ENCODE measurements at regions of chr7 and their contacts with region 1.

Region 1: DNA sequence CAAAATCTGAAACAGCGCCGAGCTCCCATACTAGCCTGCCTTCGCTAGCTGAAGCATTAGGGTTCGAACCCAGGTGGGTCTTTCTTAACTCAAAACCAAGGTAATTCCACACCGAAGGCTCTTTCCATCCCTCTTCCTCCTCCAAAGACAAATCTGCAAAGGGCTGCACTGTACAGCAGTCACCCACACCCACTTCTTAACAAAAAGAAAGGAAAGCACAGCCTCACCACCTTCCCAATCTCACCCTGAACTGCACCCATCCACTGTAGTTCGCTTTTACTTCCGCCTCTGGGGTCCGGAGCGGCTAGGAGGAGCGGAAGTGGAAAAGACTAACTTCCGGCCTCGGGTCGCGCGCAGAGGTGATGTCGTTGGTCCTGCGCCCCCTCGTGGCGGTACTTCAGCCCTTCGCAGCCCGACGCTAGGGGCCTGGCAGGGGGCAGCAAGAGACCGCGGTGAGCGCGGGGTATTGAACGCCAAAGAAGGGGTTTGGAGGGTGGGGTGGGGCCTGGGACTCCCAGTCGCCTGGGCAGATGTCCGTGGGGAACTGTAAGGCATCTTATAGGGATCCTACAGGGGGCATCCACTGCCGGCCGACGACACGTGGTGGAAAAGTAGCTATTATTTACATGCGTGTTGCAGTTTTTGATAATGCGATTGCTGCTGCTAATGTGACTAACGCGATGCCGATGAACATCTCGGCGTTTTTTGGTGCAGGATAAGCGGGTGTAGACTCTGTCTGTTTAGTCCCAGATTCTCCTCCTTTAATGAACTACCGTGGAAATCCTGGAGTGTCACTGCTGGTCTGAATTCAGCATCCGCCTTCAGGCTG is at the start of gene MTERF1:
- DNase-seq: peak; percentile 90
- H3K4me3 ChIP-seq: peak within 1 kb of the TSS; percentile 61 to 95 (median 81)
- H3K27ac ChIP-seq: peak within 1 kb of the TSS; percentile 36
- H3K4me1 ChIP-seq: peaks cover 11% of the 10 kb centered on the region
- H3K27me3 ChIP-seq: no peaks in the 10 kb centered on the region
- CTCF ChIP-seq: peak; percentile 96 to 98
- POLR2A ChIP-seq: peak; percentile 90
- total RNA-seq, gene MTERF1: 10.2 TPM in 2 replicates

Region 2: GRCh38 chr7:91046322-91047089 is 834.1 kb before region 1 on chr7:
- CTCF ChIA-PET with region 1: interaction called, 4 read pairs
- POLR2A ChIA-PET with region 1: no interaction called
- dilution Hi-C with region 1: no loop called
- intact Hi-C with region 1: loop called (anchors 5 kb)
- DNase-seq: peak; percentile 21
- H3K4me3 ChIP-seq: no peak overlapping the region
- H3K27ac ChIP-seq: no peak overlapping the region
- H3K4me1 ChIP-seq: no peaks in the 10 kb centered on the region
- H3K27me3 ChIP-seq: no peaks in the 10 kb centered on the region
- CTCF ChIP-seq: peak in 1 of 2 donors; percentile 13
- POLR2A ChIP-seq: no peak

Region 3: DNA sequence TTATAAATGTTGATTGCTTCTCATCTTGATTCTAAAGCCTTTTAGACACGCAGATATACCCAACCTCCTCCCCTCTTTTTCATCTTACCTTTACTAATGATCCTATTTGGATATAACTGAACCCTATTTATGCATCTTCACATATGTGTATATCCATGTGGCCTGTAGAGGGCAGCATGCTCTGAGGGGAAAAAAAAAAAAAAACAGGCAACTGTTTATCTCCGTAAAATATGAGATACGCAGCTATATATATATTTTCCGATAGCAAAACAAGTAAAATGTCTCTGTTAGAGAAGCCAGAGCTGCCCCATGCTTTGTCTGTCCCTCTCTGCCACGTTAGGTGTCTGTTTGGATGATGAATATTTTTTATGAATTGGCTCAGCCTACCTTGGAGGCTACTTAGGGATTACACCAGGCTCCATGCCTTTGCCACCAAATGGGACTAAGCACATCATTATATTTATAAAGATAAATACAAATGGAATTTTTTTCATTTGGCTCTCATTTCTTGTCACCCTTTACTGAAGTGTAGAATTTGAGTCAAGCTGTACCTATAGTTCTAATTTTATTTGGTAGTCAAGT is 791.2 kb before region 1 on chr7:
- CTCF ChIA-PET with region 1: interaction called, 12 read pairs
- POLR2A ChIA-PET with region 1: no interaction called
- dilution Hi-C with region 1: no loop called
- intact Hi-C with region 1: loop called (anchors 1 kb)
- DNase-seq: peak; percentile 60
- H3K4me3 ChIP-seq: peak overlapping the region in 1 of 3 experiments; percentile 7
- H3K27ac ChIP-seq: no peak overlapping the region
- H3K4me1 ChIP-seq: peaks cover 2% of the 10 kb centered on the region
- H3K27me3 ChIP-seq: no peaks in the 10 kb centered on the region
- CTCF ChIP-seq: peak; percentile 54 to 57
- POLR2A ChIP-seq: no peak

Region 4: DNA sequence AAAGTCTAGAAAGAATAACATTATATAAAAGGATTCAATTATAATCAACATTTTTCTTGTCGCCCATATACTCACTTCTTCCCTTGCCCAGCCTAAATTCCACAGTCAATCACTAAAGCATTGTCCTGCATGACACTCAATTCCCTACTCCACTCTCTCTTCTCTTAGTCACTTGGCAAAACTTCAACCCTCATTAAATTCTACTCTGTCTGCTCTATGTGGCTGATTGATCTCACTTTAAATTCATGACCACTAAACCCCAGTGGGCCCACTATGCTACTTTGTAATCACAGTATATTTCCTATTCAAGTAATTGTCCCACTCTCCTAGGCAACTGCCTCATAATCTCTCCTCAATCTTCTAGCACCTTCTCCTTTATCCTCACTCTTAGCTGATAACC is 54.2 kb before region 1 on chr7:
- CTCF ChIA-PET with region 1: interaction called, 48 read pairs
- POLR2A ChIA-PET with region 1: no interaction called
- dilution Hi-C with region 1: no loop called
- intact Hi-C with region 1: loop called (anchors 1 kb)
- DNase-seq: no peak
- H3K4me3 ChIP-seq: no peak overlapping the region
- H3K27ac ChIP-seq: no peak overlapping the region
- H3K4me1 ChIP-seq: no peaks in the 10 kb centered on the region
- H3K27me3 ChIP-seq: no peaks in the 10 kb centered on the region
- CTCF ChIP-seq: no peak
- POLR2A ChIP-seq: no peak

Region 5: DNA sequence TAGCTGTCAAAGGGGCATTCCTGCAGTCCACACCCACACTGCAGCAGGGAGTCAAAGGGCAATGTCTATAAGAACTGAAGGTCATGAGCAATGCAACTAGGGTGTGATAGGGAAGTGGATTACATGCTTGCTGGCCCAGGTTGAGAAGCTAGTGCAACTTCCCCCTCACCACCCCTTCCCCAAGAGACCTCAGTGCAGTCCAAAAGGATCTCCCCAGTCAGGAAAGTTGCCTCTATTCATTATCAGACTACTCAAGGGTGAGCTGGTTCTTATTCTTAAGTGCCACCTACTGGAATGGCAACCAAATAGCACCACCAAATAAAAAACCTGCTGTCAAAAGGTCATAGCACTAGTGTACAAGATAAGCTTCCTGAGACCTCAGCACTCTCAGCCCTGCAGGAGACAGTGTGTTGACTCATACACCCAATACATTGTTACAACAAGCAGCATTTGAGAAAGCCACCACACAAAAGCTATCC is 28.3 kb before region 1 on chr7:
- CTCF ChIA-PET with region 1: interaction called, 10 read pairs
- POLR2A ChIA-PET with region 1: no interaction called
- dilution Hi-C with region 1: no loop called
- intact Hi-C with region 1: no loop called
- DNase-seq: peak; percentile 48
- H3K4me3 ChIP-seq: no peak overlapping the region
- H3K27ac ChIP-seq: no peak overlapping the region
- H3K4me1 ChIP-seq: no peaks in the 10 kb centered on the region
- H3K27me3 ChIP-seq: no peaks in the 10 kb centered on the region
- CTCF ChIP-seq: peak in 1 of 2 donors; percentile 29
- POLR2A ChIP-seq: no peak

Region 6: GRCh38 chr7:91892821-91893340 is 12.3 kb after region 1 on chr7:
- CTCF ChIA-PET with region 1: interaction called, 13 read pairs
- POLR2A ChIA-PET with region 1: no interaction called
- dilution Hi-C with region 1: no loop called
- intact Hi-C with region 1: no loop called
- DNase-seq: no peak
- H3K4me3 ChIP-seq: no peak overlapping the region
- H3K27ac ChIP-seq: no peak overlapping the region
- H3K4me1 ChIP-seq: no peaks in the 10 kb centered on the region
- H3K27me3 ChIP-seq: peaks cover 0 to 1% of the 10 kb centered on the region in 2 experiments
- CTCF ChIP-seq: no peak
- POLR2A ChIP-seq: no peak

Region 7: DNA sequence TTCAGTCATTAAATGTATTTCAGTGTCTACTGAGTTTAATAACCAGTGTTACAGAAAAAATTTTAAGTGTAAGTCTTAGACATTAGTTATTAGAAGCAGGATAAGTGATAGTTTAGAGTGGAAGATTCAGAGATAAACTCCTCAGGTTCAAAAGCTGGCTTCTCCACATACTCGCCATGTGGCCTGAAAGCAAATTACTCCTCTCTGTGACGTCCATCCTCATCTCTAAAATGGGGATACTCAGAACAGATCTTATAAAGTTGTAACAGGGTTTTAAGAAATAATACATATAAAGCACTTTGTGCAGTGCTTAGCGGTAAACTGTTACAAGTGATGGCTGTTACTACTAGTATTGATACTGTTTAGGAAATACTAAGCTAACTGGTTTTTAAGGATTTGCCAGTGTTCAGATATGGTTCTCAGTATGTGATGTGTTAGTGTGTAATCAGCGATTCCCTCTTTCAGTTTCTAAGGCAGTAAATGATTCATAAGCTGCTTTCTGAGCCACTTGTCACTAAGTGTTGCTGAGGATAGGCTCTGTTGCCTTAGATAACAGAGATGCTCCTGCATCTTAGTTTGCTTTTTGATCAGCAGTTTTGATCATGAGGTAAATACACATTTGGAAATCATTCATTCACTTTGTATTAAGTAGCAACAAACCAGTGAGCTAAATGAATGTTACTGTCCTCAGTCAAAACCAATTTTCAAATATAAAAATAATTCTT is 195.0 kb after region 1 on chr7:
- CTCF ChIA-PET with region 1: no interaction called
- POLR2A ChIA-PET with region 1: no interaction called
- dilution Hi-C with region 1: no loop called
- intact Hi-C with region 1: no loop called
- DNase-seq: no peak
- H3K4me3 ChIP-seq: no peak overlapping the region
- H3K27ac ChIP-seq: no peak overlapping the region
- H3K4me1 ChIP-seq: peaks cover 7% of the 10 kb centered on the region
- H3K27me3 ChIP-seq: no peaks in the 10 kb centered on the region
- CTCF ChIP-seq: no peak
- POLR2A ChIP-seq: no peak

Region 8: DNA sequence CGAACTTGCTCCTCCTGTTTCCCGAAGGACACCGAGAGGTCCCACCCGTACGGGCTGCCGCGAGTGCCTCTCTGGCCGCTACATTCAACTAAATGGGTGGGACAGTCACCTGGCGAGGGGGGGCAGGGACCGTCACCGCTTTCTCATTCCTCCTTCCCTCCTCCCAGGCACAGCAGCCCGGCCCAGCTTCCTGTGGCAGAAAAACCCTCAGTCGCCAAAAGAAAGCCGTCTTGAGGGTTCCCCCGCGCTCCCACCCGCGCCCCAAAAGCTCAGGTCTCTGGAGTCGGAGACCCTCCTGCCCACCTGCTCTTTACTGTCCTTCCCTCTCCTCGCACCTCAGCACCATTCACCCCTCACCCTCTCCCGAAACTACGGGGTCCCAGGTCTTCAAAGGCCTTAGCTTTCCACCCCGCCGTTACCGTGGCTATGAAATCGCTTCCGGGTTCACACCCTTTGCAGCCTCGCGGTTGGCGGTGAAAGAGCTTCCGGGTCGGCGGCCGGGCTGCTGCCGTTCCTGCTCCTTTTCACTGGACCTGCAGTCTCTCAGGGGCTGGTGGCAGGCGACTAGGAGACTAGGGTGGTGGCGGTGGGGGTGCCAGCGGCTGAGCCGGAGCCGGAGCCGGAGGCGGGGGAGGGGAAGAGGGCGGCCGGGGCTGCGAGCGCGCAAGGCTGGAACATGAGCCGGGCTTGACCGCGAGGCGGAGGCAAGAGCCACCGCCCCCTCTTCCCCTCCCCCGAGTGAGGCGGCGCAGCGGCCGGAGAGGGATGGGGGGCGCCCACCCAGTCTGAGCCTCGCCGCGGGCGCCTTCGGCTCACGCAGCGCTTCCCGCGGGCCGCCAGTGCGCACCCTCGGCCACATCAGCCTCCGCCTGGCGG is 365.1 kb after region 1 on chr7 and contains the starts of genes ANKIB1 and KRIT1:
- CTCF ChIA-PET with region 1: no interaction called
- POLR2A ChIA-PET with region 1: no interaction called
- dilution Hi-C with region 1: no loop called
- intact Hi-C with region 1: loop called (anchors 2 kb)
- DNase-seq: peak; percentile 91
- H3K4me3 ChIP-seq: peak within 1 kb of the TSS; percentile 99
- H3K27ac ChIP-seq: peak within 1 kb of the TSS; percentile 63
- H3K4me1 ChIP-seq: peaks cover 22% of the 10 kb centered on the region
- H3K27me3 ChIP-seq: no peaks in the 10 kb centered on the region
- CTCF ChIP-seq: peak in 1 of 2 donors; percentile 26
- POLR2A ChIP-seq: no peak
- total RNA-seq, gene ANKIB1: 48.4 and 56.5 TPM in 2 replicates
- total RNA-seq, gene KRIT1: 32.9 and 43.7 TPM in 2 replicates